ENCODE measurements at regions of chr6 and their contacts with region 1.

Region 1: DNA sequence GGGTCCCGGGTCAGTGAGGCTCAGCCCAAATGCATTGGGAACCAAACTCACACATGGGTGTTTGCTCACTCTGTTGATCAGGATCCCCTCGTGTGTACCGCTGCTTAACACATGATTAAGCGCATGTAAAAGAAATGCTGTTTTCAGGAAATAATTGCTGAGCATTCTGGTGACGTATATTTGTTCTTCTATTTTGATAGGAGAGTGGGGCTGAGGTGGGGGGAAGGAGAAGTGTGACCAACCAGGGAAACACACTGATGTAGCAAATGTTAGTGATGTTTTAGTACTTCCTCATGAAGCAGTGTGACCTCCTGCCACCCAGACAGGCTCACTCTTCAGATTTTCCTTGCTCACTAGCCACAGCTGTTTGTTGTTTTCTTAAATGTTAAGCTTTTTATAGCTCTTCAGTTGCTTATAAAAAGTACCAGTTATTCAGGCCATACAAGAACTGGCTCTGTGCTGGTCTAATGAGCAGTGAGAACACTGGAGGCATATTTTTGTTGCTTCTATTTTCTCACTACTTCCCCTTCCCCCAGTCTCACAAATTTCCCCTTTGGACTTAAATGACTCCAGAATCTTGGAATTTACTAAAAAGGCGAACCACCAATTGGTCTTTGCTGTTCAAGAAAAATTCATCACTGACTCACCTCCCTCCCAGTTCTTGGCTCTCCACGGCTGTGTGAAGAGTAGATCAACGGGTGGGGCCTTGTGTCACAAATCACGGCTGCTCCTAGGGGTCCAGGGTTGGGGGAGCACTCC is 79.2 kb upstream of the BACH2 start:
- DNase-seq: no peak
- H3K4me3 ChIP-seq: no peak overlapping the region
- H3K27ac ChIP-seq: peak overlapping the region; percentile 21 to 25
- H3K4me1 ChIP-seq: no peaks in the 10 kb centered on the region
- H3K27me3 ChIP-seq: no peaks in the 10 kb centered on the region
- CTCF ChIP-seq: no peak
- POLR2A ChIP-seq: no peak

Region 2: DNA sequence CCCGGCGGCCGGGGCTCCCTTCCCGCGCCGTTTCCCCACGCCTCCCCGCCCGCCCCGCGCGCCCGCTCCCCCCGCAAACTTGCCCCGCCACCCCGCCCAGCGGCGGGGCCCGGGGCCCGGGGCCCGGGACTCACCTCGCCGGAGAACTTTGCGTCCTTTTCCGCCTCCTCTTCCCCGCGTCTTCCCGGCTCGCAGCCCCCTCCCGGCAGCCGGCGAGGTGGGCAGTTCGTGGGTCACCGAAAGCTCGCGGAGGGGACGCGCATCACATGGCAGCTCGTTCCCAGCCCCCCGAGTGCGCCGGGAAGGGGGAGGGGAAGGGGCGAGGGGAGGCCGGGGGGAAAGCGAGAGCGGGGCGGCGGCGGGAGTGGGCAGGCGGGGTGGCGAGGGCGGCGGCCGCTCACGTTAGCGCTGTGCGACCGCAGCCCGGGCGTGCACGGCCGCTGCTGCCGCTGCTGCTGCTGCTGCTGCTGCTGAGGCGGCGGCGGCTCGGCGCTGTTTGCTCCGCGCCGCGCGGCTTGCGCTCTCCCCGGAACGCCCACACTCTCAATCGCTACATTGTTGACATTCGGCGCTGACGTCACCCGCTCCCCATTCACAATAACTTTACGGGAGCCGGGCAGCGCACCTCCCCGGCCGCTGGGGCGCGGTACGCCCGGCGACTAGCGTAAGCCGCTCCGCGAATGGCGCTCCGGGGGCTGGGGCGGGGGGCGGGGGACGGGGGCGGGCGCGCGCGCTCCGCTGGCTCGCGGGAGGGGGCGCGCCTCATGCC is 79.3 kb before region 1 on chr6 and contains the start of gene BACH2:
- intact Hi-C with region 1: loop called (anchors 10 kb)
- DNase-seq: peak; percentile 87 to 89
- H3K4me3 ChIP-seq: peak within 1 kb of the TSS; percentile 77 to 99 (median 81)
- H3K27ac ChIP-seq: peak within 1 kb of the TSS; percentile 94 to 97
- H3K4me1 ChIP-seq: no peaks in the 10 kb centered on the region
- H3K27me3 ChIP-seq: no peaks in the 10 kb centered on the region
- CTCF ChIP-seq: peak in 1 of 3 donors; percentile 5
- POLR2A ChIP-seq: no peak
- total RNA-seq, gene BACH2: 6.2 to 13.8 (median 7.0) TPM